HEK293 (cell line): ENCODE measurements at regions of chr6 and their contacts with region 1.

Region 1: DNA sequence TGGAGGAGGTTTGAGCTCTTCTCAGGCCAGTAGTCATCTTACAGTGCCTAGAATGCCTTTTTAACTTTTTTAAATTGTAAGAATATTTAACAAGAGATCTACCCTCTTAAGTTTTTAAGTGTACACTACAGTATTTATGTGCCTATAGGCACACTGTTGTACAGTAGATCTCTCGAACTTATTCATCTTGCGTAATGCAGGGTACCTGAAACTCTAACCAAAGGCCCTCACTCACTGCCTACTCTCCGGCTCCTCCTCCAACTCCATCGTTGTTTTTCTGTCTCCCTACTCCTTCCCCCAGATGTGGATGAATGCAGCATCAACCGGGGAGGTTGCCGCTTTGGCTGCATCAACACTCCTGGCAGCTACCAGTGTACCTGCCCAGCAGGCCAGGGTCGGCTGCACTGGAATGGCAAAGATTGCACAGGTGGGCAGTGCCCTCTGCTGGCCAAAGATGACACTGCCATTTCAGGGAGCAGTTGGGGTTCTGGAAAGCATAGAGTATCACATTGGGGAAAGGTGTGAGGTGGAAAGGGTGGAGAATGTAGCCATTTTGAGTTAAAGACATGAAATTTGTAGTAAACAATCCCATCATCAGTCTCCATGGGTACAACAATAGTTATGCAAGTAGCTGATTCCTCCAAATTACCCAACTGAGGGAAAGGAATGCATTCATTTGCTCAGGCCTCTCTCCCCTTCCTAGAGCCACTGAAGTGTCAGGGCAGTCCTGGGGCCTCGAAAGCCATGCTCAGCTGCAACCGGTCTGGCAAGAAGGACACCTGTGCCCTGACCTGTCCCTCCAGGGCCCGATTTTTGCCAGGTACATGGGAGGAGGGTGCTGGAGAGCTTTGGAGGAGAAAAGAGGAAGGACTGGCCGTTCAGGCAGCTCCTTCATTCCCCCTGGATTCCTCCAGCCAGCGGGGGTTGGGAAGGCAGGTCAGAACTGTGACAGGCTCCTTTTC is 18.4 kb upstream of the ZNF76 start:
- H3K4me3 ChIP-seq: no peak overlapping the region
- H3K27ac ChIP-seq: no peak overlapping the region
- H3K4me1 ChIP-seq: no peaks in the 10 kb centered on the region
- CTCF ChIP-seq: peak; percentile 96

Region 2: DNA sequence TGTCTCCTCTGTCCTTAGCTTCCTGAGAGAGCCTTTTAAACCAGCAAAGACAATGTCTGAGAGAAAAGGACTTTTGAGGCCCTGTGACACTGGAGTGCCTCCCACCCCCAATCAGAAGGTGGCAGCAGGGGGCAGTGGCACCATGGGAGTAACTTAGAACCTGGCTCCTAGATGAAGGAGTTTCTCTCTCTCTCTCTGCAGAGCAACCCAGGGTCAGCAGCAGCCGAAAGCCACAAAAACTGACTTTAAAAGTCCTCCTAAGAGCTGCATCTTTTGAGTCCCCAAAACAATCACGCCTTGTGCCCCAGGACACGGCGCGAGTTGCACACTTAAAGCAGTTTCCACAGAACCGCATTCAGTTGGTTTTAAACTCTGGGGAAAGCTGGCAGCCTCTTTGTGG is 94.7 kb before region 1 on chr6:
- CTCF ChIA-PET with region 1: interaction called, 191 read pairs
- POLR2A ChIA-PET with region 1: interaction called, 3 read pairs
- H3K4me3 ChIP-seq: no peak overlapping the region
- H3K27ac ChIP-seq: no peak overlapping the region
- H3K4me1 ChIP-seq: peaks cover 2% of the 10 kb centered on the region; the same call in 1 of the 2 replicates
- CTCF ChIP-seq: peak; percentile 79

Region 3: GRCh38 chr6:35213824-35214756 is 27.0 kb before region 1 on chr6 and contains the start of gene SCUBE3:
- CTCF ChIA-PET with region 1: interaction called, 158 read pairs
- POLR2A ChIA-PET with region 1: no interaction called
- H3K4me3 ChIP-seq: peak within 1 kb of the TSS; percentile 47
- H3K27ac ChIP-seq: no peak within 1 kb of the TSS; the same call in 1 of the 2 replicates
- H3K4me1 ChIP-seq: peaks cover 29% of the 10 kb centered on the region
- CTCF ChIP-seq: no peak

Region 4: GRCh38 chr6:35230950-35231349 is 10.2 kb before region 1 on chr6:
- CTCF ChIA-PET with region 1: interaction called, 50 read pairs
- POLR2A ChIA-PET with region 1: interaction called, 3 read pairs
- H3K4me3 ChIP-seq: no peak overlapping the region
- H3K27ac ChIP-seq: no peak overlapping the region
- H3K4me1 ChIP-seq: peaks cover 9% of the 10 kb centered on the region; the same call in 1 of the 2 replicates
- CTCF ChIP-seq: no peak

Region 5: DNA sequence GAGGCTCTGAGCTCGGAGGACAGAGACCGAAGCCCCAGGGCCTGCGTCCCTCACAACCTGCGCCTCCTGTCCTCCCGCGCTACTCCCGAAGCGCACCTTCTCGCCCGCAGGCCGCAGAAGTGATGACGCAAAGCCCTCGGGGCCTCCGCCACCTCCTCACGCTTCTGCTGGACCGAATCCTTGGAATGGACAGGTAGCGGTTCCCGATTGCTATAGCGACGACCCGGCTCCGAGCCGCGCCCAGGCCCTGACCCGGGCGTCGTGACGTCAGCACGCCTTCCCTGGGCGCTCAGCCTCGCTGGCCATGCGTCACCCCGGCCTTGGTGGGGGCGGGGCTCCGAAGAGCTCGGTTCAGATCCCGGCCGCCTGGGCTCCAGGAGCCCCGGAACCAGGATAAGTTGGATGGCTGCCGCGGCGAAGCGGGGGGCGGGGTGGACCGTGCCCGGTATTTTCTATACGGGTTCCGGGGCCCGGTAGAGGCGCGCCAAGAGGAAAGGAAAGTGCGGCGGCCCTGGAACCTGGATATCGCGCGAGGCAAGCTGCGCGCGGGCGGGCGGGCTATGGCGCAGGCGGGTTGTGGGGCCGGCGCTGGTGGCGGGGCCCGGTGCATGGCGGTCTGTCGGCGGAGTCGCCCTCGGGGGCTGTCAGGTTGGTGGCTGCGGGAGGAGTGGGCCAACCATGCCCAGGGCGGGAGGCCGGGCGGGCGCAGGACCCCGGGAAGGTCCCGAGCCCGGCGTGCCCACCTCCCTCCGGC is 18.2 kb after region 1 on chr6 and contains the start of gene ZNF76:
- CTCF ChIA-PET with region 1: interaction called, 64 read pairs
- POLR2A ChIA-PET with region 1: interaction called, 5 read pairs
- H3K4me3 ChIP-seq: peak within 1 kb of the TSS; percentile 76
- H3K27ac ChIP-seq: peak within 1 kb of the TSS; percentile 85
- H3K4me1 ChIP-seq: peaks cover 3% of the 10 kb centered on the region; the same call in 1 of the 2 replicates
- CTCF ChIP-seq: no peak

Region 6: GRCh38 chr6:35651244-35651643 is 410.1 kb after region 1 on chr6:
- CTCF ChIA-PET with region 1: no interaction called
- POLR2A ChIA-PET with region 1: no interaction called
- H3K4me3 ChIP-seq: no peak overlapping the region
- H3K27ac ChIP-seq: no peak overlapping the region
- H3K4me1 ChIP-seq: no peaks in the 10 kb centered on the region; the same call in 1 of the 2 replicates
- CTCF ChIP-seq: no peak